ENCODE measurements at regions of chr2 and their contacts with region 1.

Region 1: DNA sequence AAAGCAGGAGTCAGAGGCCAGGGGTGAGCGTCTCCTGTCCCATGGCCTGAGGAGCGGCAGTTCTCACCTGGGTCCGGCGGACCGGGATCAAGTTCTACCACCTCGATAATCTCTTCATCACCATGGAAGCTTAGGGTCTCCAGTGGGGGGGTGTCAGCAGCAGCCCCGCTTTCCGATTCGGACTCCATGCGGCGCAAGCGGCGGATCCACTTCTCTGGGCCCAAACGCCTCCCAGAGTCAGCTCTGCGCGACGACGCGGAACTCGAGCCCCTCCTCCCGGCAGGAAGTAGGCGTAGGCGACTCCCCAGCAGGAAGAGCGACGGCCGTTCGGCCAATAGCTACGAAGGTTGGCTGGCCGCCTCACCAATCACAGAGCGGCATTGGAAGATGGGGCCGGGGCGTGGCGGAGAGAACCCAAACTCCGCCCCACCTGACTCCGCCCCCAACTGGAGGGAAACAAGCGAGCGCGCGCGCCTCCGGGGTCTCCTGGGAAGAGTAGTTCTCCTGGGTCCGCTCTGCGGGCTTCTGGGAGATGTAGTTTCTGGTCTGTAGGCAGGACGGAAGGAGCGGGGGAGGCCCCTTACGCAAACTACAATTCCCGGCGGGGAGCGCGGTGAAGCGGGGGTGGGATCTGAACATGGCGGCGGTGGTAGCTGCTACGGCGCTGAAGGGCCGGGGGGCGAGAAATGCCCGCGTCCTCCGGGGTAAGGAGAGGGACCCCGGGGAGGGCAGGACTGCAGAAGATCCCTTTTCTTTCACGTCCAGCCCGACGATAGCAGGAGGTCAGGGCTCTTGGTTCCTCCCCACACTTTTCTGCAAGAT is at the starts of genes AAMP and PNKD:
- DNase-seq: peak; percentile 100
- ATAC-seq: peak; percentile 92
- H3K4me3 Mint-ChIP-seq: peak within 1 kb of the TSS; percentile 88
- H3K27ac Mint-ChIP-seq: peak within 1 kb of the TSS; percentile 86
- H3K4me1 Mint-ChIP-seq: peaks cover 34% of the 10 kb centered on the region
- H3K27me3 Mint-ChIP-seq: no peaks in the 10 kb centered on the region
- total RNA-seq, gene AAMP: 49.7 to 72.2 TPM
- total RNA-seq, gene PNKD: 17.8 to 18.5 TPM

Region 2: GRCh38 chr2:216412022-216412999 is 1857.8 kb before region 1 on chr2 and contains the start of gene SMARCAL1:
- CTCF ChIA-PET with region 1: no interaction called
- POLR2A ChIA-PET with region 1: no interaction called
- intact Hi-C with region 1: loop called in 1 of 2 experiments (anchors 5 kb)
- DNase-seq: peak; percentile 100
- ATAC-seq: peak; percentile 93
- H3K4me3 Mint-ChIP-seq: peak within 1 kb of the TSS; percentile 94
- H3K27ac Mint-ChIP-seq: peak within 1 kb of the TSS; percentile 93
- H3K4me1 Mint-ChIP-seq: peaks cover 13% of the 10 kb centered on the region
- H3K27me3 Mint-ChIP-seq: no peaks in the 10 kb centered on the region
- total RNA-seq, gene SMARCAL1: 25.9 to 27.7 TPM

Region 3: GRCh38 chr2:218229239-218229638 is 40.9 kb before region 1 on chr2:
- CTCF ChIA-PET with region 1: interaction called, 7 read pairs
- POLR2A ChIA-PET with region 1: no interaction called
- intact Hi-C with region 1: loop called in 1 of 2 experiments (anchors 1 kb)
- DNase-seq: peak; percentile 70
- ATAC-seq: peak; percentile 83
- H3K4me3 Mint-ChIP-seq: peak overlapping the region; percentile 45
- H3K27ac Mint-ChIP-seq: peak overlapping the region; percentile 95
- H3K4me1 Mint-ChIP-seq: peaks cover 77% of the 10 kb centered on the region
- H3K27me3 Mint-ChIP-seq: no peaks in the 10 kb centered on the region

Region 4: DNA sequence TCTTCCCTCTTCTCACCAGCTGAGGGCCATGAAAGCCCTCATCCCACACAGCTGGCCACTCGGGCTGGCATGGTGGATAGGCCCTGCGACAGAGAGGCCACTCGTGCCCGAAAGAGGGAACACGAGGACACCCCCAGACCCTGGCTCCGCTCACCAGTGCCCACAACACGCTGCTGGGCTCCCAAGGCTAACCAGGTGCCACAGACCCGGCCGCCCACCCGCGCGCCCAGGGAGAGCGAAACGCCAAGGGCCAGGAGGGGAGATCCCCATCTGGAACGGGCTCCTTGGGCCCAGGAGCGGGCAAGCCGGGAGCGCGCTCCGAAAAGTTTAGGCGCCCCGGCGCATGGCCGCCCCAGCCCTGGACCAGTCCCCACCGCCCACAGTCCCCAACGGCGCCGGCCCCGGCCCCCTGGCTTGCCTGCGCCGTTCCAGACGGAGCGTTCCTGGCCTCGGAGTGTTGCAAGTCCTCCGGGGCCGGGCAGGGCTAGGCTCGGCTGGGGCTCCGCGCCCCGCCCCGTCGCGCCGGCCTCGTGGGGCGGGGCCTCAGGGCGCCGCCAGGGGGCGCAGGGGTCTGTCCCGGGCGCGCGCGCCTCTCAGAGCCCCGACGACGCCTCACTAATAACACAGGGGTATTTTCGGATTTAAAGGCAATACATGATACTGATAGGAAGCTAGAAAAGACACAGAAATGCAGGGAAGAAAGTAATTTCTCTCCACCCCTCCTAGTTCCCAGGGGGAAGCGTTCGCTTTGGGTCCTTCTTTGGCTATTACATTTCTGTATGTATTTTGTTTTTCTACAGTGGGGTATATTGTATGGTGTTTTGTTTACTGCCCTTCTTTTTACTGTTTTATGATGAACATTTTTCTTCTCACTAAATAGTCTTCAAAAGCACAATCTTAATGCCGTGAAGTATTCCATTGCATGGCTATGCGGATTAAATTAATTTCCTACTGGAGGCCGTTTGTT is 22.2 kb after region 1 on chr2 and contains the start of gene TMBIM1:
- CTCF ChIA-PET with region 1: interaction called, 205 read pairs
- POLR2A ChIA-PET with region 1: interaction called, 24 read pairs
- intact Hi-C with region 1: loop called (anchors 1 kb)
- DNase-seq: peak; percentile 87
- ATAC-seq: peak; percentile 84
- H3K4me3 Mint-ChIP-seq: peak within 1 kb of the TSS; percentile 87
- H3K27ac Mint-ChIP-seq: peak within 1 kb of the TSS; percentile 91
- H3K4me1 Mint-ChIP-seq: peaks cover 53% of the 10 kb centered on the region
- H3K27me3 Mint-ChIP-seq: no peaks in the 10 kb centered on the region
- total RNA-seq, gene TMBIM1: 51.1 to 54.0 TPM

Region 5: DNA sequence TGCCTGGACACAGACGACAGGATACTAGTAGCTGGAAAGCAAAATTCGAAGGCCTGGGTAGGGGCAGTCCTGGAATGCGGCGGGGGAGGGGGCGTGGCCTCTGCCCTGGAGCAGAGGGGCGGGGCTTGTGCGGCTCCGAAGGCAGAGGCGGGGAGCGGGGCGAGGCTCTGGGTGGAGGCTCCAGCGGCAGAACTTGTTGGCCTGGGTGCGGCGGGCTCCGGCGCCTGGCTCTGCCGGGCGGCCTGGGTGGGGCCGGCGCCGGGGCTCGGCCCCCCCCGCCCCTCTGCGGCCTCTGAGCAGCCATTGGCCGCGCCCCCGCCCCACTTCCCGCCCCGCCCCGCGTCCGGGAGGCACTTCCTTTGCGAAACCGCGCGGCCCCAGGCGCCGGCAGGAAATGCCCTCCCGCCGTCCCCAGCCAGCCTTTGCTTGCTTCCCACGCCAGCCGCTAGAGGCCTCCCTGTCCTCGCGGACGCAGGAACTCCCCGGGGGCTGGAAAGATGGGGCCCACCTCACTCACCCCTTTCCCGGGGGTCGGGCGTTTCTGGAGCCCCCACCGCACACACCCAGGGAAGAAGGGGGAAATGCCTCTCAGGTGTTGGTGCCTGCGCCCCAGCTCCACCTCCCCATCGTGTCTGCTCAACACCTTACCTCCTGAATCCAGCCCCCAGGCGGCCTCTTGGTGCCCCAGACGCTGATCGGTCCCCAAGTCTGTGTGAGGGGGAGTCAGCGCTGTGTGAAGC is 136.3 kb after region 1 on chr2:
- CTCF ChIA-PET with region 1: interaction called, 3 read pairs
- POLR2A ChIA-PET with region 1: no interaction called
- intact Hi-C with region 1: loop called in 1 of 2 experiments (anchors 1 kb)
- DNase-seq: peak; percentile 97
- ATAC-seq: peak; percentile 88
- H3K4me3 Mint-ChIP-seq: peak overlapping the region; percentile 75
- H3K27ac Mint-ChIP-seq: peak overlapping the region; percentile 90
- H3K4me1 Mint-ChIP-seq: peaks cover 38% of the 10 kb centered on the region
- H3K27me3 Mint-ChIP-seq: peaks cover 5% of the 10 kb centered on the region

Region 6: GRCh38 chr2:219498280-219499057 is 1228.4 kb after region 1 on chr2 and contains the start of gene GMPPA:
- CTCF ChIA-PET with region 1: no interaction called
- POLR2A ChIA-PET with region 1: no interaction called
- intact Hi-C with region 1: loop called in 1 of 2 experiments (anchors 2 kb)
- DNase-seq: peak; percentile 96
- ATAC-seq: peak; percentile 97
- H3K4me3 Mint-ChIP-seq: peak within 1 kb of the TSS; percentile 86
- H3K27ac Mint-ChIP-seq: peak within 1 kb of the TSS; percentile 72
- H3K4me1 Mint-ChIP-seq: peaks cover 38% of the 10 kb centered on the region
- H3K27me3 Mint-ChIP-seq: peaks cover 38% of the 10 kb centered on the region
- total RNA-seq, gene GMPPA: 35.2 to 35.5 TPM